Left ventricle myocardium superior (tissue), 1 donor: ENCODE measurements at regions of chr3 and their contacts with region 1.

Region 1: GRCh38 chr3:19348929-19349564 is 200.7 kb downstream of the KCNH8 start:
- DNase-seq: no peak
- ATAC-seq: no peak

Region 2: DNA sequence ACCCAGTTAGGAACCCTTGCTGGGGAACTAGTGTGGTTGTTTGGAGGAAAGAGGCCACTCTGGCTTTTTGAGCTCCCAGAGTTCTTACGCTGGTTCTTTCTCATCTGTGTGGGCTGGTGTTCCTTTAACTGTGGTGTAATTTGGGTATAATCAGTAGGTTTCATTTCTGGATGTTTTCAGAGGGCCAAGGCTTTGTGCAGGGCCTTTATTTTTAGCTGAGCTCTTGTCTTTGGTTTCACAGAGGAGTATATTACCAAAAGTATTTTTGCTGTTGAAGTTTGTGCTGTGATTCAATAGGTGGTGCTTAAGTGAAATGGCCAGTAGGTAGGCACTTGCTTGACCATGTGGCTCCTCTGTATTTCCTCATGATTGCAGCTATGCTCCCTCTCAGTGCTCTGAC is 157.1 kb after region 1 on chr3:
- intact Hi-C with region 1: no loop called
- DNase-seq: no peak
- ATAC-seq: no peak

Region 3: DNA sequence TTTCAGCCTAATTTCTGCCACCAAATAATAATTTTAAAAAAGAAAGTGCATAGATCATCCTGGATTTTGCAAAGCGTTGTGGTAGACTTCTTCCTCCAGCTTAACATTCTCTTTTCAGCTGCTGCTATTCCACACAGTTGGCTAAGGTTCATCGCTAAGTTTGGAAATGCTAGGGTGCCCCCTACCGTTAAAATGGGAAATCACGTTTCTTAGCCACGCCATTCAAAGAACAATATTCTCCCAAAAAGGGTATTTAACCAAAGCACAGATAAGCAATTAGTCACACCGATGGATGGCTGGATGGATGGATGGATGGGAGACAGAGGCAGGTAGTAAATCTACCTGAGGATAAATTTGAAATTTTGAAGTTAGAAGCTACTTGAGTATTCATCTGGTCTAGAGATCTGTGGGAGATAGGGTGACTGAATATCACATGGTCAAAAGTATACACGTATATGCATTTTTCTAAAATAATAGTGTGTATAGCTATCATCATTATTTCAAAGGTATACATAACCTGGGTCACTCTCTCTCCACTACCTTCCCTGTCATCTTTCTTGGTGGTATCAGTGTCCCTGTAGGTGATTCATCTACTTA is 517.8 kb after region 1 on chr3:
- intact Hi-C with region 1: loop called (anchors 10 kb)
- DNase-seq: no peak
- ATAC-seq: peak; percentile 49